ENCODE measurements at regions of chr22 and their contacts with region 1.

Region 1: GRCh38 chr22:17910561-17911311 is 113.6 kb downstream of the MICAL3 start:
- DNase-seq: peak; percentile 81
- H3K4me3 ChIP-seq: no peak overlapping the region
- H3K27ac ChIP-seq: peak overlapping the region; percentile 1 to 82 (median 72)
- H3K4me1 ChIP-seq: peaks cover 0 to 85% (median 48%) of the 10 kb centered on the region in 6 donors
- H3K27me3 ChIP-seq: no peaks in the 10 kb centered on the region
- CTCF ChIP-seq: peak in 6 of 11 experiments; percentile 7 to 40 (median 14)
- POLR2A ChIP-seq: no peak

Region 2: DNA sequence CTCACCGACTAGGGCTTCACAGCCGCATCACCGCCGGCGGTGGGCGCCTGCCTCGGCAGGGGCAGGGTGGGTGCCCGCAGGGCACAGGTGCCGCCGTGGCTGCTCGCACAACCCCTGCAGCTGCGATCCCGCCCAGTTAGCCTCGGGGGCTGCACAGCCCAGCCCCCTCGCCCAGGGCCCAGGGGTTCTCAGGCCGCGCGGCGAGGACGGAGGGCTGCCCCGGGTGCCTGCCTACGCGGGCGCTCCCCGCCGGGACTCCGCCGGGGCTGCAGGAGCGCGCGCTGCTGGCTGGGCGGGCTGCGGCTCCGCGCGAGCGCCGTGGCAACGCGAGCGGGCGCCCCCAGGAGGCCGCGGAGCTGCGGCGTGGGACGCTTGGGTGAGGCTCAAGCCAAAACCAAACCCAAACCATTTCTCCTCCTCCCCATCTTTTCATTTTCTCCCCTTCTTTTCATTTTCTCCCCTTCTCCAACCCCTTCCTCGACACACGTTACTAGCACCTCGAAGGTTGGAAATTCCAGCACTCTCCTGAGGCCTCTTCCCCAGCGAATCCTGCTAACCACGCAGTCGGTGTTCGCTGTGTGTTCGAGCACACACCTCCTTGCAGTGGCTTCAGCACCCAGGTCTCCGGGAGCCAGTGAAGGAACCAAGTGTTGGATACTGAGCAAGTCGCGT is 113.7 kb after region 1 on chr22 and contains the start of gene MICAL3:
- intact Hi-C with region 1: loop called (anchors 10 kb)
- DNase-seq: peak; percentile 93
- H3K4me3 ChIP-seq: peak within 1 kb of the TSS; percentile 63 to 93 (median 75)
- H3K27ac ChIP-seq: peak within 1 kb of the TSS in 7 of 8 donors; percentile 41 to 68 (median 57)
- H3K4me1 ChIP-seq: peaks cover 0 to 28% (median 23%) of the 10 kb centered on the region in 6 donors
- H3K27me3 ChIP-seq: peaks cover 0 to 44% (median 0%) of the 10 kb centered on the region in 7 donors
- CTCF ChIP-seq: peak; percentile 16 to 81 (median 64)
- POLR2A ChIP-seq: no peak
- total RNA-seq, gene MICAL3: 54.3 to 133 (median 92.1) TPM

Region 3: DNA sequence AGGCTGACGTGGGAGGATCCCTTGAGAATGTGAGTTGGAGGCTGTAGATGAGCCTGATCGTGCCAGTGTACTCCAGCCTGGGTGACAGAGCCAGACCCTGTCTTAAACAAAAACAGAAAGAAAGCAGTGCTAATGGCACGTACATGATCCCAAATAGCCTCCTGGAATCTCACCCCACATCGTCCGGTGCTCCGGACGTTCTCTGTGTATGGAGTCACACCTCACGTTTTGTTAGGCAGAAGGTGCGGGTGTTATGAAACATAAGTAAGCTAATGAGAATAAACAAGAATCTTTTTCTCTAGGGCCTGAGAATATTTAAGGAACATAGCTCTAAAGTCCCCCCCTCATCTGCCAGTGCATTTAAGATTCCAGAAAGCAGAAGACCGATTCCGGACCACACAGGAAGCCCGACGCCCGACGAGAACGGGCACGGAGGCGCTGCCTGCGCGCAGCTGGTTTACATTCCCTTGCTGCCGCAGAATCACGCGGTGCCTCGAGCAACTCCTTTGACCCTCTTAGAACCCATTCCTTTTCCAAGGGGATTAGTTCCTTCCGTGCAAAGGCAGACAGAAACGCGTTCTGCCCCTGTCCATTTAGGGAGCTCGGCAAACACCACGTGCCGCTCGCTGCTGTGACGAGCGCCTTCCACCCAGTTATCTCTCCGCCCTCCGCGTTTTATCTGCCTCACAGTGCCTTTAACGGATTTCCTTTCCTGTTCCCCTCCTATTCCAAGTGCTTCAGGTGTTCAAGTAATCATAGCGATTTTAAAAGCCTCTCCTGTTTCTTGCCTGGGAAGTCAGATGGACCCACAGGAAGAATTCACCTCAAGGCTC is 137.5 kb after region 1 on chr22:
- intact Hi-C with region 1: no loop called
- DNase-seq: peak; percentile 72
- H3K4me3 ChIP-seq: peak overlapping the region in 1 of 8 donors; percentile 34
- H3K27ac ChIP-seq: peak overlapping the region in 6 of 8 donors; percentile 42 to 65 (median 59)
- H3K4me1 ChIP-seq: peaks cover 0 to 22% (median 14%) of the 10 kb centered on the region in 6 donors
- H3K27me3 ChIP-seq: no peaks in the 10 kb centered on the region
- CTCF ChIP-seq: no peak
- POLR2A ChIP-seq: no peak

Measured in spleen (tissue), 13 donors.